ENCODE measurements at regions of chrX and their contacts with region 1.

Region 1: DNA sequence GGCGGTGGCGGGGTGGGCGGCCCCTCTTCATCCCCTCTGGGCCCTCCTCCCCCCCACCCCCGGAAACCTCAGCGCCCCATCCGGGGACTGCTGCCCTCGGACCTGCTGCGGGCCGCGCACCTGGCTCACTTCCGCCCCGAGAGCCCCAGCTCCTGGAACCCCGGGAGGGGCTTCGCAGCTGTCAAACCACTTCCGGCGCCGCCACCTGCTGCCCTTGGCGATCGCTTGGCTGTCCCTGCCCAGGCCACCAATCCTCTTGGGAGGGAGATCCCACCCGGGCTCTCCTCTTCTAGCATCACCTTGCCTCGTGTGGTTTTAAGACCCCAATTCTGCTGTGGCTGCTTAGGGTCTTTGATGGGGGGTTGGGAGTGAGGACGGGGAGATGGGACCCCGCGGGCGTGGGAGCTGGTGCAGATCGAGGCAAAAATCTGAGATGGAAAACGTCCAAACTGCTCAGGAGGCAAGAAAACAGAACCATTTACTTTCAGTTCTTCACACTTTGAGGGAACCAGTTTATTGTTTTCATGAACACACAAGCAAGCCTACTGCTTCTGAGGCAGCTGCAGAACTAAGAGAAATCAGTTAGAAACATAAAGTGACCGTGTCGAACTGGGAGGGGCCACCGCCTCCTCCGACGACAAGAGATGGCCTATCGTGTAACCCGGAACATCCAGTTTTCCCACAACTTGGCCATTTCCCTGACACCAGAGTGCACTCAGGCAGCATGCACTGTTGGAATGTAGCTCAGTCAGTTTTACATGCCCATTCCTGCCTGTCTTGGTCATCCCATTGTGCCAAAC is 779 bp downstream of the MTMR1 start:
- DNase-seq: peak; percentile 38 to 84 (median 54)
- ATAC-seq: peak; percentile 49 to 52
- H3K4me3 Mint-ChIP-seq: peak overlapping the region; percentile 68 to 97 (median 93)
- H3K27ac Mint-ChIP-seq: peak overlapping the region; percentile 84 to 99 (median 98)
- H3K4me1 Mint-ChIP-seq: peaks cover 15 to 77% (median 62%) of the 10 kb centered on the region in 4 donors
- H3K27me3 Mint-ChIP-seq: no peaks in the 10 kb centered on the region

Region 2: DNA sequence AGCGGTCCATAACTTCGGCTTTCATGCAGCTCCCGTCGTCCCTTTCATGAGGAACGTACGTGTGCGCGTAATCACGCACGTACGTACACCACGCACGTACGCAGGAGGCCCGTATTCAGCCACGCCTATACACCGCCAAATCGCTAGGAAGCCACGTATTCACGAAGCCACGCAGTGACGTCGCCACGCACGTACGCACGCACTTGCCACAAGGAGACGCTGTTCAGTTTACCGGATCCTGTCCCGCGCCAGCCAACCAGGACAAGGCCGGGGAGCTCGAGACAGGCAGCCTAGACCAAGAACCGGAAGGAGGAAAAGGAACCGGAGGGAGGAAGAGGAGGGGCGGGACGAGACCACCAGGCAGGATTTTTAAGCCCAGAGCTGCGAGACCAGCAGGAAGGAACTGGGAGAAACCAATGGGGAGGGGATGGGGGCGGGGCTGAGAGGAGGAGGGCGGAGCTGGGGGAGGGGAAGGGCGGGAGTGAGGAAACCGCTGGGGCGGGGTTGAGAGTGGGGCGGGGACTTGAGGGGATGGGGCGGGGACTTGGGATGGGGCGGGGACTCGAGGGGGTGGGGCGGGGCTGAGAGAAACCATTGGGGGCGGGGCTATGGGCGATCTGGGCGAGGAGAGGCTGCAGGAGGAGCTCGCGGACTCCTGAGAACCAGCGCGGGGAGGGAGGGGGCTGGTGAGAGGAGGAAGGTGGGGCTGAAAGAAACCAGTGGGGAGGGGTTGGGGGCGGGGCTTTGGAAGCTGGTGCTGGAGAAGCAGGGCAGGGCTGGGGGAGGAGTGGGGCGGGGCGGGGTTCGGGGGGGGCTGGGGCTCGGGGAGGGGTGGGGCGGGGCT is 755.3 kb before region 1 on chrX and contains the start of gene EOLA2:
- POLR2A ChIA-PET with region 1: interaction called, 19 read pairs
- DNase-seq: peak; percentile 76 to 97 (median 92)
- ATAC-seq: peak; percentile 55 to 64
- H3K4me3 Mint-ChIP-seq: peak within 1 kb of the TSS; percentile 84 to 97 (median 94)
- H3K27ac Mint-ChIP-seq: peak within 1 kb of the TSS; percentile 94 to 99 (median 98)
- H3K4me1 Mint-ChIP-seq: peaks cover 0 to 5% (median 3%) of the 10 kb centered on the region in 4 donors
- H3K27me3 Mint-ChIP-seq: no peaks in the 10 kb centered on the region
- polyA plus RNA-seq, gene EOLA2: 25.7 to 42.4 (median 26.5) TPM

Region 3: DNA sequence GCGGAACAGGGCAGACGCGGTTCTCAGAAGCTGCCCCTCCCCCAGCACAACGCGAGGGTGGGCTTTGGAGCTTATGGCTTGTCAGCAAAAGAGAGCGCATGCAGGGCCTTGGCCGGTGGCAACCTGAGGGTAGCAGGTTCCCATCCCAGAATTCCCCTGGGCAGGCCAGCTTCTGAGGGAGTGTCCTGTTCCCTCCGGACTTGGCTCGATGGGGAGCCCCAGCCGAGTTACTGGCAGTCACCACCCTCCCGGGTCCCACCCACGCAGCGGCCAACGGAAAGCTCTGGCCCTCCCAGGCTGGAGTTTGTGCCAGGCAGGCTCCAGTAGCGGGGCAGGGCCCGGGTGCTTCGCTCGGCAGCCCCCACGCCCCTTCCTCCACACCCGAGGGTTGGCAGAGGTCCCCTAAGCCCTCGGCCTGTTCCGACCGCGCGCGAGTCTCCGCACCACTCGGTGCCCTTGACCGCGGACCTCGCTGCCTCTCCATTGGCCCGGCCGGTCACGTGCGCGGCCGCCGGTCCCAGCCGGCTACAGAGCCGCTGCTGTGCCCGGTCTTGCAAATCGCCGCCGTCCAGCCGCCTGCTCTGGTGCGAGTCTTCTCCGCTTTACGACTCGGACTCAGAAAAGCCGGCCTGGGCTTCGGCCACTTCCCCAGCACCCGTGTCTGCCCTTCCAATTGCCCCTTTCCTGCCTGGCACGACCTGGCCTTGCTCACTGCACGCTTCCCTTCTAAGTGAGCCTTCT is 146.4 kb before region 1 on chrX:
- POLR2A ChIA-PET with region 1: interaction called, 14 read pairs
- DNase-seq: peak in 1 of 10 donors; percentile 62
- ATAC-seq: peak in 1 of 2 donors; percentile 39
- H3K4me3 Mint-ChIP-seq: peak overlapping the region; percentile 73 to 88 (median 84)
- H3K27ac Mint-ChIP-seq: peak overlapping the region in 7 of 10 donors; percentile 12 to 96 (median 83)
- H3K4me1 Mint-ChIP-seq: peaks cover 10 to 29% (median 26%) of the 10 kb centered on the region in 4 donors
- H3K27me3 Mint-ChIP-seq: no peaks in the 10 kb centered on the region

Region 4: DNA sequence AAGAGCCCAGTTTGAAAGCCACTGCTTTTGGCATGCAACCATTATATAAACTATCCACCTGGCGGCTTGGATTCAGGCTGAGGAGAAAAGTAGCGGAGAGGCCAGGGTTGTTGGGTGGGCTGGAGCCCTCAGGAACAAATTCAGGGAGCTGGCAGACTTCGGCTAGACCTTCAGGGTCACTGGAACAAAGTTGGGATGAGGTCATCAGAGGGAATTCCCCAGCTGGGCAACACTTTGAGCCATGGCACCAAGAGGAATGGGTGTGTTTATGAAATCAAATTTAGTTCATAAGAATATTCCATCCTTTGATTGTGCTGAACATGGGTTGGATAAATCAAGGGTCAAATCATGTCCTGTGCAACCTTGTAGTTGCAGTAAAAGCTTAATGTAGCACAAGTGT is 21.2 kb after region 1 on chrX:
- POLR2A ChIA-PET with region 1: interaction called, 27 read pairs
- DNase-seq: no peak
- ATAC-seq: no peak
- H3K4me3 Mint-ChIP-seq: no peak overlapping the region
- H3K27ac Mint-ChIP-seq: peak overlapping the region in 7 of 10 donors; percentile 2 to 80 (median 59)
- H3K4me1 Mint-ChIP-seq: peaks cover 8 to 47% (median 37%) of the 10 kb centered on the region in 4 donors
- H3K27me3 Mint-ChIP-seq: no peaks in the 10 kb centered on the region

Measured in naive thymus-derived CD8-positive, alpha-beta T cell (primary cell).